Heart left ventricle (tissue), 16 donors: ENCODE measurements at regions of chr11 and their contacts with region 1.

Region 1: GRCh38 chr11:70073871-70074371 is 4.2 kb upstream of the ANO1 start:
- DNase-seq: peak in 3 of 5 donors; percentile 61 to 74 (median 74)
- ATAC-seq: peak in 3 of 4 donors; percentile 76 to 86 (median 83)
- H3K4me3 ChIP-seq: no peak overlapping the region
- H3K27ac ChIP-seq: peak overlapping the region in 6 of 12 donors; percentile 37 to 80 (median 72)
- H3K4me1 ChIP-seq: peaks cover 0 to 40% (median 17%) of the 10 kb centered on the region in 12 donors
- H3K27me3 ChIP-seq: peaks cover 0 to 43% (median 7%) of the 10 kb centered on the region in 9 donors
- CTCF ChIP-seq: no peak
- POLR2A ChIP-seq: no peak

Region 2: DNA sequence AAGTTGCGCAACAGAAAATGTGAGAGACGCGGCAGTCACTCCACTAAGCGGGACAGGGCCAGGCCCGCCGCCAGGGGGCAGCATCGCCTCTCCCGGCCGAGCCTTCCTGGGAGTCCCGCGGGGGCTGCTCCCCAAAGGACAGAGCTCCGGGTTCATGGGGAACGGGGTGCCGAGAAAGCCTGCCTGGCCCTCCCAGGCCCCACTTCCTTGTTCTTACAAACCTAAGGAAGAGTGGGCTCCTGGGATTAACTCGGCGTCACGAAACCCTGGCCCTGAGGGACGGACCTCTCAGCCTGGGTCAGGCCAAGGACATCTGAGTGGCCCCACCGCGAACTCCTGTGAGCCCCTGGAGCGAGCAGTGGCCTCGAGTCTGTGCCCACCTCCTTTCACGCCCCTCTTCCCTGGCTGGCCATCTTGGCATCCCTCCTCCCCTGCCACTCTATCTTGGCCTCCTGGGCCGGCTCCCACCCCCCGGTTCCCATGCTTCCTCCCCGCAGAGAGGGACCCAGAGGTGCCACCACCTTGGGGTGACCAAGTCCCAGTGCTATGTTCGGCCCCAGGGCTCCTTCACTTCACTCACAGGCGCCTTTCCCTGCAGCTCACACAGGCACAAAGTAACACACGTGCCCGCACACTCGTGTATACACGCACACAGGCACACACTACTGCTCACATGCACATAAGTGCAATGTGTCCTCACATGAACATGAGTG is 154.8 kb before region 1 on chr11:
- intact Hi-C with region 1: loop called in 8 of 10 experiments (anchors 2 to 10 kb)
- DNase-seq: peak; percentile 79 to 92 (median 80)
- ATAC-seq: peak; percentile 47 to 78 (median 66)
- H3K4me3 ChIP-seq: peak overlapping the region in 3 of 12 donors; percentile 9 to 19 (median 14)
- H3K27ac ChIP-seq: peak overlapping the region in 10 of 12 donors; percentile 39 to 80 (median 64)
- H3K4me1 ChIP-seq: peaks cover 3 to 36% (median 28%) of the 10 kb centered on the region in 12 donors
- H3K27me3 ChIP-seq: peaks cover 0 to 17% (median 0%) of the 10 kb centered on the region in 9 donors
- CTCF ChIP-seq: peak; percentile 89 to 98 (median 96)
- POLR2A ChIP-seq: no peak

Region 3: DNA sequence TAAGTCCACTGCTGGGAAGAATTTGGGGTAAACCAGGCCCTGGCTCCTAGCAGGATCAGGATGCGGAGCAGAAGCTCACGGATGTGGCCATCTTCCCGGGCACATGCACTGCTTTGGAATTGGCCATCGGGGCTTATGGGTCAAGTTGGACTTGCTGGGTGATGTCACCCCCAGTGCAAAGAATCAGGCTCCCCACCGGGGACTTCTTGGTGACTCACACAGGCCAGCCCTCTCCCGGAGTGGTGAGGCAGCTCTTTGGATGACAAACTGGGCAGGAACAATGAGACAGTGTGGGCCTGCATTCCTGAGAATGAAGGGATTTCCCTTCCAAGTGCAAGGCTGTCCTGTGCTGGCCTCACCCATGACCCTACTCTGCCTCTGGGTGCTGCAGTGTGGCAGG is 124.6 kb before region 1 on chr11:
- intact Hi-C with region 1: loop called in 3 of 10 experiments (anchors 5 to 10 kb)
- DNase-seq: peak in 2 of 5 donors; percentile 48 to 63
- ATAC-seq: peak in 3 of 4 donors; percentile 63 to 75 (median 66)
- H3K4me3 ChIP-seq: no peak overlapping the region
- H3K27ac ChIP-seq: no peak overlapping the region
- H3K4me1 ChIP-seq: peaks cover 0 to 13% (median 1%) of the 10 kb centered on the region in 12 donors
- H3K27me3 ChIP-seq: no peaks in the 10 kb centered on the region
- CTCF ChIP-seq: no peak
- POLR2A ChIP-seq: no peak

Region 4: DNA sequence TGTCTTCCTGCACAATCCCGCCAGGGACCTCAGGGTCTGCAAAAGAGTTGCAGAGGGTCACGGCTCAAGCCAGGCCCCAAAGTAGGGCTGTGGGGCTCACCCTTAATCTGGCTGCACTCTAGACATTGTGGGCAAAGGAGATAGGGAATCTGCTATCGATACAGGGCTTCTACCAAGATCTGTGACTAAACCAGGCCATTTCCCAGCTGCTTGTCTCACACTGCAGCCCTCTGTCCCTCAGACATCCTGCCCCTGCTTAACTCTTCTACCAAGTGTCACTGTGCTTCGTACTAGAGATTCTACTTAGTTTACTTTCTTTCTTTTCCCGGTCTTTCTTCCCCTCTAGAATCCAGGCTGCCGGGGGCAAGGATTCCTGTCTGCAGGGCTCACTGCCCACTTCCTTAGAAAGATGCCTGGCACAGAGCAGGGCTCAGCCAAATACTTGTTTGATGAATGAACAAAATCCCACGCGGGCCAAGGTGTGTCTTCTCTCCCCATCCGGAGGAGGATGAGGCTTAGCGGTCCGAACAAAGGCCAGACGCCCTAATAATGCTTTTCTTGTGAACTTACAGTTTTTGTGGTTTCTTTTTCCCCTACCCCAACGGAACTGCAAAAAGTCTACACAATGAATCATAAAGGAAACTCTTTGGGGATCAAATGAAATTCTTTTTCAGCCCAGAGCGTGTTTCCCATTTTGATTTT is 57.1 kb before region 1 on chr11:
- intact Hi-C with region 1: loop called in 1 of 10 experiments (anchors 5 kb)
- DNase-seq: no peak
- ATAC-seq: no peak
- H3K4me3 ChIP-seq: no peak overlapping the region
- H3K27ac ChIP-seq: peak overlapping the region in 5 of 12 donors; percentile 27 to 57 (median 49)
- H3K4me1 ChIP-seq: peaks cover 0 to 31% (median 4%) of the 10 kb centered on the region in 12 donors
- H3K27me3 ChIP-seq: no peaks in the 10 kb centered on the region
- CTCF ChIP-seq: no peak
- POLR2A ChIP-seq: no peak

Region 5: DNA sequence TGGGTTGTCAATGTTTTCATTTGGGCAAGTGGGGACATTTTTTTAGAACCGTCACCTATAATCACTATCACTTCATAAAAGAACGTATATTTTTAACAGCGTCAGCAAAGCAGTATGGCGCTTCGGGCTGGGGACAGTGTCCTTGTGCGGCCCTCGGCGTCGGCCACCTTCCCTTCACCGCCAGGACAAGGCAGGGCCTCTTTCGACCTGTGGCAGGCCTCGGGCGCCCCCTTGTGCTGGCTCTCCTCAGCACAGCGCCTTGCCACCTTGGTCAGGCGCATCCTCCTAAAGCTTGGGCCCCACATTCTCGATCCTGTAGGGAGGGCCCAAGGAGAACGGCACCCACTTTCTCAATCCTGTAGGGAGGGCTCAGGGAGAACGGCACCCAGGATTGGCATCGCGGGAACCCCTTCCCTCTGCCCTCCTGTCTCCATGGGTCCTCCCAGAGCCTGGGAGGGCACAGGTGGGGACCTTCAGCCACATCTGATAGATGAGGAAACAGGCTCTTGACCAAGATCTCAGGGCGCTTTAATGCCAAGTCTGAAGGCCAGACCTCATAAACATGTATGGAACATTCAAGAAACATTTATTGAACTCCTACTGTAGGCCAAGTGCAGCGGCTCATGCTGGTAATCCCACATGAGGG is 117.7 kb after region 1 on chr11:
- intact Hi-C with region 1: loop called in 1 of 10 experiments (anchors 5 kb)
- DNase-seq: peak; percentile 74 to 90 (median 80)
- ATAC-seq: peak; percentile 80 to 93 (median 89)
- H3K4me3 ChIP-seq: no peak overlapping the region
- H3K27ac ChIP-seq: peak overlapping the region in 1 of 12 donors; percentile 18
- H3K4me1 ChIP-seq: peaks cover 0 to 6% (median 0%) of the 10 kb centered on the region in 12 donors
- H3K27me3 ChIP-seq: no peaks in the 10 kb centered on the region
- CTCF ChIP-seq: peak; percentile 82 to 95 (median 92)
- POLR2A ChIP-seq: no peak